Dendritic cell treated with granulocyte-macrophage colony-stimulating factor and Interleukin-4, amounts not matched to agents 40 ng/mL and 50 ng/mL, for 4 days (primary cell): ENCODE measurements at regions of chr9 and their contacts with region 1.

Region 1: GRCh38 chr9:89442981-89443814 is 54.7 kb downstream of the SEMA4D start:
- H3K4me3 Mint-ChIP-seq: no peak overlapping the region
- H3K27ac Mint-ChIP-seq: peak overlapping the region; percentile 91
- H3K4me1 Mint-ChIP-seq: peaks cover 87% of the 10 kb centered on the region
- H3K27me3 Mint-ChIP-seq: no peaks in the 10 kb centered on the region

Region 2: DNA sequence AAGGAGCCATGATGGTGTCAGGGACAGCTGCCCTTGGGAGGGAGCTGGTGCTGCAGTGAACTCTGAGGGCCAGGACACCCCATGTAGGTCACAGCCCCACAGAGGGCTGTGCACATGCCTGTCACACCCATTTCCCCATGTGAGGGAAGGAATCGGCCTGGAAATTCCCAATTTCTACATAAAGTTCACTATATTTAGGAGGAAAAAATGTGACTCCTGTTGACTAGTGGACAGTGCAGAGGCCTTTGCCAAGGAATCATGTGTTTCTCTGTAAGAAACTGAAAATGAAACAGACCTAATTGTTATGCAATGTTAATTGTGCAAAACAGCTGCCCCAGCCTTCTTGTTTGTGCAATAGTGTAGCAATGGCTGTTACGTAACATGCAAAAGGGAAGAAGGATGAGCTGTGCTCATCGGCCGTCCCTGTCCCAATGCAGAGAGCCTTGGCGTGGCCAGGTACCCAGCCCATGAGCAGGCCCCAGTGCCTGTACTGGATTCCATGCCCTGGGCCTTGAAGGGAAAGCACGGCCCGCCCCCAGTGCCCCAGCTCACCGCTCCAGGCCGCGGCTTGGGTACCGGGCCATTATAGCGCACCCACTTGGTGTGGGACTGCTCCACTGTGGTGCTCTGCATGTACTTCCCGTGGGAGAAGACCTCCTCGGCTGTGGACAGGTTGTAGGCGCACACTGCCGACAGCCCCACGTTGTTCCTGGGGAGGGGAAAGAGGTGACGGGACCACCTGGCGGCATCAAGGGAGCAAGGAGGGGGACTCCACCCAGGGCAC is 54.9 kb before region 1 on chr9:
- intact Hi-C with region 1: loop called (anchors 5 kb)
- H3K4me3 Mint-ChIP-seq: peak overlapping the region; percentile 9
- H3K27ac Mint-ChIP-seq: peak overlapping the region; percentile 78
- H3K4me1 Mint-ChIP-seq: peaks cover 50% of the 10 kb centered on the region
- H3K27me3 Mint-ChIP-seq: no peaks in the 10 kb centered on the region

Region 3: DNA sequence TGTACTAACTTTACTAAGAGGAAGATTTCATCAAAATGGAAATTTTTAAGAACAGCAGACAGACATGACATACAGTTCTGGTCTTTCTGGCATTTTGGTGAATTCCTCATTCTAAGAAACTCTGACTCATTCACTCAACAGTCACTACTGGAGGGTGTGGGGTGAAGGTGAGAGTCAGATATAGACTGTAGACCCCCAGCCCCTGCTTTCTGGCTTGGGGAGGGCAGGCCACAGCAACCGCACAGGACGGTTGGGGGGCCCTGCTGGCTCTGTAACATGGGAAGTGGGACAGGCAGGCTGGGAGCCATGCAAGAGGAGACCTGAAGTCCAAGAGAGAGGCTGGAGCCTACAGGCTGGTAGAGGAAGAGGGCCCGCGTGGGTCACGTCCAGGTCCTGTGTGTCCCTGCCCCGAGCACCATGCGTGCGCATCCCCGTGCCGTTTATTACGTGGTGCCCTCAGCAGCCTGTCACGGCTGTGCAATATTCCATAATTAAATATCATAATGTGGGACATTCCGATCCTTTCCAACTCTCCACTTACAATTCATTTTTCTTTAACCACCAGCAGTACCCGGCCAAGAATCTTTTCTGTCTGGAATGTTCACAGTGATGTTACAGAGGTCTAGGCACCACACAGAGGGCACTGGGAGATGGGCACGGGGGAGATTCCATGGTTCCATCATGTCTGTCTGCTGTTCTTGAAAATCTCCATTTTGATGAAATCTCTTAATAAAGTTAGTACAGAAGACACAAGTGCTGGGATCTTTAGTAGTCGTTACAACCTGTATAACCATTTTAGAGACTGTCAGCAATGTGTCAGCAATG is 20.8 kb before region 1 on chr9:
- intact Hi-C with region 1: loop called (anchors 1 kb)
- H3K4me3 Mint-ChIP-seq: peak overlapping the region; percentile 51
- H3K27ac Mint-ChIP-seq: peak overlapping the region; percentile 95
- H3K4me1 Mint-ChIP-seq: peaks cover 94% of the 10 kb centered on the region
- H3K27me3 Mint-ChIP-seq: no peaks in the 10 kb centered on the region

Region 4: GRCh38 chr9:89497978-89498851 is 55.0 kb after region 1 on chr9 and contains the start of gene SEMA4D:
- intact Hi-C with region 1: loop called (anchors 10 kb)
- H3K4me3 Mint-ChIP-seq: peak within 1 kb of the TSS; percentile 74
- H3K27ac Mint-ChIP-seq: peak within 1 kb of the TSS; percentile 76
- H3K4me1 Mint-ChIP-seq: peaks cover 66% of the 10 kb centered on the region
- H3K27me3 Mint-ChIP-seq: peaks cover 2% of the 10 kb centered on the region